ENCODE measurements at regions of chr3 and their contacts with region 1.

Region 1: GRCh38 chr3:142148792-142149672 is at the start of gene TFDP2:
- DNase-seq: peak; percentile 87 to 88
- ATAC-seq: peak; percentile 90 to 95
- H3K4me3 ChIP-seq: peak within 1 kb of the TSS; percentile 68 to 87 (median 83)
- H3K27ac ChIP-seq: peak within 1 kb of the TSS; percentile 76 to 89 (median 87)
- H3K4me1 ChIP-seq: peaks cover 15 to 26% of the 10 kb centered on the region in 2 donors
- H3K27me3 ChIP-seq: no peaks in the 10 kb centered on the region
- CTCF ChIP-seq: no peak
- POLR2A ChIP-seq: peak; percentile 57 to 89
- total RNA-seq, gene TFDP2: 43.0 to 125 (median 52.4) TPM

Region 2: GRCh38 chr3:141875374-141875892 is 273.6 kb before region 1 on chr3:
- in situ Hi-C with region 1: no loop called
- intact Hi-C with region 1: loop called (anchors 10 kb)
- DNase-seq: peak; percentile 70 to 72
- ATAC-seq: peak; percentile 79 to 80
- H3K4me3 ChIP-seq: peak overlapping the region; percentile 82 to 99 (median 86)
- H3K27ac ChIP-seq: peak overlapping the region; percentile 96 to 100 (median 98)
- H3K4me1 ChIP-seq: peaks cover 19 to 23% of the 10 kb centered on the region in 2 donors
- H3K27me3 ChIP-seq: no peaks in the 10 kb centered on the region
- CTCF ChIP-seq: peak; percentile 65 to 91 (median 84)
- POLR2A ChIP-seq: no peak

Region 3: GRCh38 chr3:141959921-141960554 is 189.0 kb before region 1 on chr3:
- in situ Hi-C with region 1: no loop called
- intact Hi-C with region 1: loop called (anchors 5 kb)
- DNase-seq: no peak
- ATAC-seq: no peak
- H3K4me3 ChIP-seq: no peak overlapping the region
- H3K27ac ChIP-seq: peak overlapping the region in 3 of 4 donors; percentile 3 to 23 (median 4)
- H3K4me1 ChIP-seq: no peaks in the 10 kb centered on the region
- H3K27me3 ChIP-seq: no peaks in the 10 kb centered on the region
- CTCF ChIP-seq: no peak
- POLR2A ChIP-seq: no peak

Region 4: GRCh38 chr3:142019794-142020320 is 129.2 kb before region 1 on chr3:
- in situ Hi-C with region 1: no loop called
- intact Hi-C with region 1: loop called (anchors 2 kb)
- DNase-seq: peak; percentile 10 to 34
- ATAC-seq: peak; percentile 91 to 96
- H3K4me3 ChIP-seq: no peak overlapping the region
- H3K27ac ChIP-seq: peak overlapping the region; percentile 49 to 77 (median 67)
- H3K4me1 ChIP-seq: peaks cover 24 to 25% of the 10 kb centered on the region in 2 donors
- H3K27me3 ChIP-seq: no peaks in the 10 kb centered on the region
- CTCF ChIP-seq: no peak
- POLR2A ChIP-seq: no peak

Region 5: GRCh38 chr3:142211035-142211434 is 62.0 kb after region 1 on chr3:
- in situ Hi-C with region 1: no loop called
- intact Hi-C with region 1: no loop called
- DNase-seq: no peak
- ATAC-seq: no peak
- H3K4me3 ChIP-seq: no peak overlapping the region
- H3K27ac ChIP-seq: no peak overlapping the region
- H3K4me1 ChIP-seq: no peaks in the 10 kb centered on the region
- H3K27me3 ChIP-seq: no peaks in the 10 kb centered on the region
- CTCF ChIP-seq: no peak
- POLR2A ChIP-seq: no peak

Region 6: DNA sequence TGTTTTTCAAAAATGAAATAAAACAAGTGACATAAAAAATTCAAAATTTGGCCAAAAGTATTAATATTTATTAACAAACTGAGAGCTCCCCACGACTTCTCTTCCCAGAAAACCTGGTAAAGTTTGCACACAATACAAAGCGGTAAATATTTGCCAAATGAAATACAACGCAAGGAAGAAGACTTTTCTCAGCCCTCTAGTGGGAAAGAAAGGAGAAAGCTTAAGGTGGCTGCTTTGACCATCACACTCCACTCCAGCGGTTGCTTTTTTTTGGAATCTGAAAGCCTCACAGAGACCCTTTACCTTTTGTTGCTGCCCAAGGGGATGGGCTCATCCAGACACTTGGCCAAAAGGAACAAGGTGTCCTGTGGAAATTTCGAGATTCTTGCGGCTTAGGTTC is 77.5 kb after region 1 on chr3:
- in situ Hi-C with region 1: no loop called
- intact Hi-C with region 1: loop called (anchors 2 kb)
- DNase-seq: no peak
- ATAC-seq: no peak
- H3K4me3 ChIP-seq: no peak overlapping the region
- H3K27ac ChIP-seq: no peak overlapping the region
- H3K4me1 ChIP-seq: peaks cover 9 to 13% of the 10 kb centered on the region in 2 donors
- H3K27me3 ChIP-seq: no peaks in the 10 kb centered on the region
- CTCF ChIP-seq: no peak
- POLR2A ChIP-seq: no peak

Region 7: DNA sequence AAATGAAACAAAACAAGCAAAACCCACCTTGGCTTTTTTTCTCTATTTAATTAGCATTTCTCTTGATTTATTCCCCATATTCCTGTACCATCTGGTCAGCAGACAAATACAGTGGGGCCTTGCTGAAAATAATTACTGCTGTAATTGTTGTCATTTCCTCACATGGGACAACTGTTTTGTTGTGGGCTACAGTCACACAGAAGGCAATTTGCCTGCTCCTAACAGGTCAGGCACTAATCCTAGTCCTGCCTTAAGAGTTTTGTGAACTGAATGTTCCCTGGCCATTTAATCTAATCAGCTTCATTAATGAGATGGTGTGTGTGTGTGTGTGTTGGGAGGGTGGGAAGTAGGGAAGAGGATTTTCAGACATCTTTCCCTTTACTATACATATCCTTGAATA is 586.4 kb after region 1 on chr3:
- in situ Hi-C with region 1: no loop called
- intact Hi-C with region 1: no loop called
- DNase-seq: no peak
- ATAC-seq: no peak
- H3K4me3 ChIP-seq: no peak overlapping the region
- H3K27ac ChIP-seq: no peak overlapping the region
- H3K4me1 ChIP-seq: no peaks in the 10 kb centered on the region
- H3K27me3 ChIP-seq: no peaks in the 10 kb centered on the region
- CTCF ChIP-seq: no peak
- POLR2A ChIP-seq: no peak

Measured in gastrocnemius medialis (tissue), 4 donors.